ENCODE measurements at regions of chr6 and their contacts with region 1.

Region 1: DNA sequence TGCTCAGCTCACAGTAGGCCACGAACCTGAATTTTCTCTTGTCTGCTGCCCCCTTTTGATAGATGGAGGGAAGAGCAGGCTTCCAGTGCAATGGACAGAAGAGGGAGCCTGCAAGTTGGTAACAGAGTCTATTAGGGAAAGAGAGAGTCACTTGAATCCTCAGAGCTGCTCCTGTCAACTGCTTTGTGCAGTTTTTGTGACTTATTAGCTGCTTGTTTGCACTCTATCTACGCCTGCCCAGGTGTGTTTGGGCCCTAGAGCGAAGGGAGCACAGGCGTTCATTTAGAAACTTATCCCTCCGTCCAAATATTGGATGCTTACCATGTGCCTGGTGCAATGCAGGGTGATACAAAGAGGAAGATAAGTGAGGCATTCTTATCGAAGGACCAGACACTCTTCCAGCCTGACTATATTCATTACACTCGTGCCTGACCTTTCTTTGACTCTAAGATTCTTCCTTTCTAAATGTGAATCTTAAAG is 11.6 kb upstream of the SLC2A12 start:
- DNase-seq: peak; percentile 47
- H3K4me3 ChIP-seq: no peak overlapping the region
- CTCF ChIP-seq: peak; percentile 93

Region 2: GRCh38 chr6:133671376-133671775 is 392.6 kb before region 1 on chr6:
- CTCF ChIA-PET with region 1: no interaction called
- POLR2A ChIA-PET with region 1: no interaction called
- DNase-seq: no peak
- H3K4me3 ChIP-seq: no peak overlapping the region
- CTCF ChIP-seq: no peak

Region 3: GRCh38 chr6:133835901-133836300 is 228.1 kb before region 1 on chr6:
- CTCF ChIA-PET with region 1: no interaction called
- POLR2A ChIA-PET with region 1: no interaction called
- DNase-seq: no peak
- H3K4me3 ChIP-seq: no peak overlapping the region
- CTCF ChIP-seq: no peak

Region 4: GRCh38 chr6:133945158-133945557 is 118.8 kb before region 1 on chr6:
- CTCF ChIA-PET with region 1: interaction called, 40 read pairs
- POLR2A ChIA-PET with region 1: no interaction called
- DNase-seq: no peak
- H3K4me3 ChIP-seq: no peak overlapping the region
- CTCF ChIP-seq: no peak

Region 5: GRCh38 chr6:133959667-133960368 is 104.2 kb before region 1 on chr6:
- CTCF ChIA-PET with region 1: interaction called, 40 read pairs
- POLR2A ChIA-PET with region 1: no interaction called
- DNase-seq: no peak
- H3K4me3 ChIP-seq: no peak overlapping the region
- CTCF ChIP-seq: no peak

Region 6: GRCh38 chr6:133973109-133973971 is 90.7 kb before region 1 on chr6:
- CTCF ChIA-PET with region 1: interaction called, 305 read pairs
- POLR2A ChIA-PET with region 1: interaction called, 3 read pairs
- DNase-seq: no peak
- H3K4me3 ChIP-seq: no peak overlapping the region
- CTCF ChIP-seq: no peak

Region 7: GRCh38 chr6:134002821-134003220 is 61.2 kb before region 1 on chr6:
- CTCF ChIA-PET with region 1: interaction called, 14 read pairs
- POLR2A ChIA-PET with region 1: no interaction called
- DNase-seq: no peak
- H3K4me3 ChIP-seq: no peak overlapping the region
- CTCF ChIP-seq: no peak

Region 8: DNA sequence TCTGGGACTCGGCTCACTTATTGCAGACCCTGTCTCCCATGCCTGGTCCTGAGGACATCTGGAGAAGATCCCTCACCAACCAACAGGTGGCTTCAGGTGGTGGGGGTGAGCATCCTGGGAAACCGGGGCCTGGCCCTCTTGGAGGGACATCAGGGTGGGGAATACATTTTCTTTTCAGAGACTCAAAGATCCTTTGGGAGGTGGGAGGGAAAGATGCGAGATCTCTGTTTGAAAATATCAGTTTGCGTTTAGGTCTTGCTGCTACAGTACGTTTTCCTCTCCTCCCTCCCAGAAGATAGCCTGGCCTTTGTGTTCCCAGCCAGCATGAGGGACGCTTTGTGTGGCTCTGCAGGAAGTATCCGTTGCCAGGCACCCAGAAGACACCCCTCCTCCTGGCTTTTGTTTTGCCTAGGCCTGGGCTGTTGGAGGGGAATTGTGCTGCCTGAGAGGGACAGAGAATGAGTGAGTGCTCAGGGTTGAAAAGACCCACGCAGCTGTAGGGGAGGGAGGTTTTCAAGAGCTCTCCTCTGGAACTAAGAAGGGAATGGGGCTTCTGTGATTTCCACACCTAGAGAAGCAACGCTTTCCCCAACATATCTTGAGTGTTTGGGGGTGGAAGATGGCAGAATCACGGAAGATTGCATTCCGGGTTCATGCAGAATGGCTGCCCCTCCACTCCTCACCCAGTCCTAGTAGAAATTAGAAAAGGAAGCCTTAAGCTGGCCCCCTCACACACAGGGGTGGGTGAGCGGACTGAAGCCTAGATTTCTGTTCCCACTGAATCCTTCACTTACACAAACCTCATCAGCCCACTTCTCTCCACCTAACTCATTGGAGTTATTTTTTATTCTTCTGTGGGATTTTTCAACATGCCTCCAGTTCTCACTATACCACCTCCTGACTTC is 10.4 kb after region 1 on chr6:
- CTCF ChIA-PET with region 1: interaction called, 30 read pairs
- POLR2A ChIA-PET with region 1: no interaction called
- DNase-seq: no peak
- H3K4me3 ChIP-seq: no peak overlapping the region
- CTCF ChIP-seq: no peak

Region 9: DNA sequence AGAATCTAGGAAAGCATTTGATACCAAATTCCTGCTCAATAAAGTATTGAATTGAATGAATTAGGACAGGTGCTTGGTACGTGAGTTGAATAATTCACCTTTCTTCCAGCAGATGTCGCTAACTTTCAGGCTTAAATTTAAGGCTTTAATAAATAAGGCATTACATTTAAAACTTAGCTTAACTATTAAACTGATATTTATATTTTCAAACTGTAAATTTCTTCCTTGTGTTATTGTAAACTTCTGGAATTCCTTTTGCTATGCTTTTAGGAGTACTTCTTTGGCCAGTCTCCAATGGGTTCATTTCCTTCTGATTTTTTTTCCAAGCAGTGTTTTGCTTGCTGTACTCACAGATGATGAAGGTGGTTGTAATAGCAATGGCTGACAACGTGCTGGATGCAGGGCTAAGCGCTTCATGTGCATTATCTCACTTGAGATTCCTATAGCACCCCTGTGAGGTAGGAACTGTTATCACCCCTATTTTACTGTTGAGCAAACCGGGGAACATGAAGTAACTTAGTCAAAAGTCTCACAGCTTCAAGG is 59.7 kb after region 1 on chr6:
- CTCF ChIA-PET with region 1: interaction called, 13 read pairs
- POLR2A ChIA-PET with region 1: no interaction called
- DNase-seq: no peak
- H3K4me3 ChIP-seq: no peak overlapping the region
- CTCF ChIP-seq: peak; percentile 45

Region 10: DNA sequence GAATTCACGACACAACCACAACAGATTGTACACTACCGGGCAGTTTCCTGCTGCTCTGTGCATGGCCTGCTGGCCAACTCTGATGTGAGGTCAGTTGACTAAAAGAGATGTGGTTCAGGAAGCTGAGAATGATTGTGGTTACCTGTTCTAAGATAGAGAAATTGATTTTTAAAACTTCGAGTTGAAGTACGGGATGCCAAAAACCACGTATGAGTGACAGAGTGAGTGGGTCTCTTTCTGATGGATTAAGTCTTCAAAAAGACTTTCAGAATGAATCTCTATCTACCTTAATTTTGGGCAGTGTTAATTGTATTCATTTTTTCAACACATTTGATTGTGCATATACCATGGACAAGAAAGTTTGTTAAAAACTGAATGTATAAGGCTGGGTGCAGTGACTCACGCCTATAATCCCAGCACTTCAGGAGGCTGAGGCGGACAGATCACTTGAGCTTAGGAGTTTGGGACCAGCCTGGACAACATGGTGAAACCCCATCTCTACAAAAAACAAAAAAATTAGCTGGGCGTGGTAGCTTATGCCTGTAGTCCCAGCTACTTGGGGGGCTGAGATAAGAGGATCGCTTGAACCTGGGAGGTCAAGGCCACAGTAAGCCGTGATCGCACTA is 132.7 kb after region 1 on chr6:
- CTCF ChIA-PET with region 1: no interaction called
- POLR2A ChIA-PET with region 1: no interaction called
- DNase-seq: no peak
- H3K4me3 ChIP-seq: no peak overlapping the region
- CTCF ChIP-seq: no peak